HepG2 (cell line): ENCODE measurements at regions of chr9 and their contacts with region 1.

Region 1: DNA sequence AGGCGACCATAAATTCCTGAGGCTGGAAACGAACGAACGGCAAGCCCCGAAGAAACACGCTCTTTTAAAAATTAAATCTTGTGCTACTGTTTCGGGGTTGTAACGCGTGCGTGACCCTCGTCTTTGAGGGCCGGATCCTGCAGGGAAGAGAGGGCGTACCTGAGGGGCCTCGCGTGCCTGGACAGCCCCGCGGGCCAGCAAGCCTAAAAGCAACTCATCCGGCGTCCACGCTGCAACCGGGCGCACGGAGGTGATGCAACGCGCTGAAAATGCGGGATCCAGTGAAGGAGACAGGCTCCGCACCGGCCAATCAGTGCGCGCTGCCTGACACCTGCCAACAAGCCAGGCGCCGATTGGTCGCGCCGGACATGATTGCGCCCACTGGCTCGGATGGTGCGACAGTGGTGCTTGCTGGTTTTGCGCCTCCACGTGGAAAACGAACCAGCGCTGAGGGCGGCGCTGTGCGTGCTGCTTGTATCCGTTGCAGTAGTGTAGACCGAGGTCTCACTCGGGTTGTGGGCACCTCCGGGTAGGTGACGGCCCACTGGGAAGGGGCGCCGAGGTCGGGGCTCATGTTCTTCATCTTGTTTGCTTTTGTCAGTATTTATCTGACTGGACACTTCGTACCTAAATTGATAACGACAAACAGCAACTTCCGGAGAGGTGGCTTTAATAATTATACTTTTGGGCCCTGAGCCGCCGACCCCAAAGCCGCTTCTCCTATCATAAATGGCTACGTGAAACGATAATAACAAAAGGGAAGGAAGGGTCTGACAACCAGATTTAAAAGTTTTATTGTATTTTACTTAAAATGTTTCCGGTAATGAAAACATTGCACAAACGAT is at the start of gene IARS1:
- DNase-seq: peak; percentile 96
- ATAC-seq: peak; percentile 96
- H3K4me3 ChIP-seq: peak within 1 kb of the TSS; percentile 78 to 92 (median 82)
- H3K27ac ChIP-seq: peak within 1 kb of the TSS; percentile 85
- H3K4me1 ChIP-seq: peaks cover 36% of the 10 kb centered on the region
- H3K27me3 ChIP-seq: no peaks in the 10 kb centered on the region; a peak in 1 of 5 replicates
- CTCF ChIP-seq: peak; percentile 91
- EP300 ChIP-seq: peak in 1 of 2 experiments; percentile 26; a peak in 1 of 4 replicates
- POLR2A ChIP-seq: peak; percentile 95 to 97
- RAD21 ChIP-seq: no peak
- total RNA-seq, gene IARS1: 185 and 277 TPM in 2 replicates

Region 2: GRCh38 chr9:92254381-92255337 is 39.0 kb before region 1 on chr9:
- CTCF ChIA-PET with region 1: no interaction called
- POLR2A ChIA-PET with region 1: no interaction called
- in situ Hi-C with region 1: no loop called
- intact Hi-C with region 1: loop called (anchors 5 kb)
- DNase-seq: no peak
- ATAC-seq: peak; percentile 38; the same call in 2 of the 3 replicates
- H3K4me3 ChIP-seq: no peak overlapping the region
- H3K27ac ChIP-seq: no peak overlapping the region
- H3K4me1 ChIP-seq: no peaks in the 10 kb centered on the region
- H3K27me3 ChIP-seq: no peaks in the 10 kb centered on the region
- CTCF ChIP-seq: no peak
- EP300 ChIP-seq: no peak
- POLR2A ChIP-seq: no peak
- RAD21 ChIP-seq: no peak